Activated T-helper 1 cell treated with anti-CD3 and anti-CD28 coated beads, Interleukin-12 subunit alpha, Interleukin-12 subunit beta, Interleukin-2, Interleukin-4 antibody, amounts not matched to agents 30 ng/mL and 10 ng/mL and 1 ng/mL, durations not matched to agents 14 hours and 24 hours and 36 hours (primary cell): ENCODE measurements at regions of chr15 and their contacts with region 1.

Region 1: DNA sequence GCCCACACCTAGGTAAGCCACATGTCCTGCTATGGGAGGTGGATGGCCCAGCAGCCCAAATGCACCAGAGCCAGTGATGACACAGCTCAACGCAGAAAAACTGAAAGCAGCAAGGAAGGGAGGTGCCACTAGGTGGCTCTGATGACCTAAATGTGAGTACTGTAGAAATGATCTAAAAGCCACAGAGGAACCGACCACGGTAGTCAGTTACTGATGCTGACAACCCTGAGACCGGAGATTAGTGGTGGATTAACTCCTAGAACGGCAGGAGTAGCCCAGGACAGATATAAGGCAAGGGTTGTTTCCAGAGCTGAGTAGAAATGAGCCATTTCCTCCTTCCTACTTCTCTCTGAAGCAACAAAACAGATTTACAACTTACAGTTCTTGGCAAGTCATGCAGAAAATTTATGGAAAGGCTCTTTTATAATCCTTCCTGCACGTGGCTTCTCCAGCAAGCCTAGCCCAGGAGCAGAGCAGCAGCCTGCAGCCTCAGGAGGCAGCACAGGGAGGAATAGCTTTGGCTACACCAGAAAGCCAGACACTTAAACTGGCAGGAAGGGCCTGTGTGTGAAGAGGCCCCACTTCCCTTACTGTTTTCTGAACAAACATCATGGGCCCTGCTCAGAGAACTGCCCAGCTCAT is 13.1 kb downstream of the FBXL22 start:
- DNase-seq: peak; percentile 74
- H3K4me3 Mint-ChIP-seq: peak overlapping the region; percentile 38
- H3K27ac Mint-ChIP-seq: peak overlapping the region; percentile 89
- H3K4me1 Mint-ChIP-seq: peaks cover 31% of the 10 kb centered on the region
- H3K27me3 Mint-ChIP-seq: no peaks in the 10 kb centered on the region

Region 2: GRCh38 chr15:63668601-63669000 is 58.3 kb after region 1 on chr15:
- intact Hi-C with region 1: loop called (anchors 1 kb)
- DNase-seq: no peak
- H3K4me3 Mint-ChIP-seq: peak overlapping the region; percentile 68
- H3K27ac Mint-ChIP-seq: peak overlapping the region; percentile 72
- H3K4me1 Mint-ChIP-seq: peaks cover 58% of the 10 kb centered on the region
- H3K27me3 Mint-ChIP-seq: no peaks in the 10 kb centered on the region

Region 3: GRCh38 chr15:63729115-63729884 is 119.0 kb after region 1 on chr15:
- intact Hi-C with region 1: loop called (anchors 10 kb)
- DNase-seq: no peak
- H3K4me3 Mint-ChIP-seq: no peak overlapping the region
- H3K27ac Mint-ChIP-seq: no peak overlapping the region
- H3K4me1 Mint-ChIP-seq: peaks cover 22% of the 10 kb centered on the region
- H3K27me3 Mint-ChIP-seq: no peaks in the 10 kb centered on the region

Region 4: DNA sequence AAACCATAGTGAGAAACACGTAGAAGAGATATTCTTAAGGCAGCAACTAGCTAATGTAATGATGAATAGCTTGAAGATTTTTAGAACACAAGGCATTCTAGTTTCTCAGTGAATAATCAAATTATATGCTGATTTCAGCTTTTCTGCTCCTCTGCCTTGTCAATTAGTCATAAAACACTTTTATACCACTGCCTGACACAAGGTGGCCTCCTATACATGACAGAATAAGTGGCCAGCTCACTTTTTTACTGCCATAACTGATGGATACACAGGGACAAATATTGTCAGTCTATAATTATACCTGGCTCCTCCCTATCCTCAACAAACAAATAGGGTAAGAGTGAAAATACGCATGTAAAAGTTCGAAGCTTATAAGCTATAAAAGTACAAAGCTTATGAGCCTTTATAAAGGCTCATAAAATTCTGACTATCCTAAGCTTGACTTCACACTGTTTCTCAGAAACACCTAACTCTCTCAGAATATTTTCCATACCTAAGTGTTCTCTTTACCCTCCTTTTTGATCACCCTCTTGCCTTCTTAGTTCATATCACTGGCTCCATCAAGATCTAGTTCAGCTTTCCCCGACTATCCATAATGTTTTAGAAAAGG is 141.9 kb after region 1 on chr15:
- intact Hi-C with region 1: loop called (anchors 1 kb)
- DNase-seq: peak; percentile 21
- H3K4me3 Mint-ChIP-seq: no peak overlapping the region
- H3K27ac Mint-ChIP-seq: no peak overlapping the region
- H3K4me1 Mint-ChIP-seq: peaks cover 9% of the 10 kb centered on the region
- H3K27me3 Mint-ChIP-seq: no peaks in the 10 kb centered on the region

Region 5: DNA sequence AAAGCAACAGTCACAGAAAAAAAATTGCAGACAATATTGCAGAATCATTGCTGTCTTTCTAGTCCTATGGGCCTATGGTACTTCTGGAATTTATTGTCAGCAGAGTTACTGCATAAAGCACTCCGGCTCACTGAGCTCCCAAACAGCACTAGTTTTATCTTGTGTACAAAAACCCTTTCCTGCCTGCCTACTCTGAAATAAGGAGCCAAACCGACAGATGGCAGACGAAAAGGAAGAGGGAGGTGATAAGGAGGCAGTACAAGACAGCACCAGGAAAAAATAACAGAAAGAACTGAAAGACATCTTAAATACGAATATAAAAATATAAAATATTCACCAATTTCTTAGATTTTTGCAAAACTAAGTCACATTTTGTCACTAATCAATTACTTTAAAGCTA is 207.9 kb after region 1 on chr15:
- intact Hi-C with region 1: no loop called
- DNase-seq: no peak
- H3K4me3 Mint-ChIP-seq: no peak overlapping the region
- H3K27ac Mint-ChIP-seq: no peak overlapping the region
- H3K4me1 Mint-ChIP-seq: peaks cover 71% of the 10 kb centered on the region
- H3K27me3 Mint-ChIP-seq: no peaks in the 10 kb centered on the region